Activated CD4-positive, alpha-beta memory T cell treated with anti-CD3 and anti-CD28 coated beads for 36 hours (primary cell): ENCODE measurements at regions of chr1 and their contacts with region 1.

Region 1: DNA sequence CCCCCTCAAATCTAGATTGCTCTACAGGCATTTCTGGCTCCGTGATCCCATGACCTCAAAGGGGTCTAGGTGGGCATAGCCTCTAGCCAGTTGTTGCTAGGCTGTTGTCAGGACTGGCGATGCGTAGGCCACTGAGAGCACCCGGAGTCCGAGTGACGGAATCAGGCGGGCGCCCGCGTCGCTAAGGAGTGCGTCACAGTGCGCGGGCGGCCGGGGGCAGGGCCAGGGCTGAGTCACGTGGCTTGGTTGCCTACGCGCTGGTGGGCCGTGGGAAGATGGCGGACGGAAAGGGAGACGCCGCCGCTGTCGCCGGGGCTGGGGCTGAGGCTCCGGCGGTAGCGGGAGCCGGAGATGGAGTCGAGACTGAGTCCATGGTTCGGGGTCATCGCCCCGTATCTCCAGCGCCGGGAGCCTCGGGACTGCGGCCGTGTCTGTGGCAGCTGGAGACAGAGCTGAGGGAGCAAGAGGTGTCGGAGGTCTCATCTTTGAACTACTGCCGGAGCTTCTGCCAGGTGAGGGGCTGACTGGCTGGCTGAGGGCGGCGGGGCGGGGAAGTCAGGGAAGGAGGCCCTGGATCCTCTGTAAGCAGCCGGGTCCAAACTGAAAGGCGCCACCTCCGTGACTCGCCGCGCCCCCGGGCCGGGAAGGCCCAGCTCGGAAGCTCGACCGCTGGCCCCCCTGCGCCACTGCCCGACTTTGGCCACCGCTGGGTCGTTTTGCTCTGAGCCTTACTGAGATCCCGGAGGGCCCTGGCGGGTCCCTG is at the start of gene RLF:
- DNase-seq: peak; percentile 97
- H3K4me3 Mint-ChIP-seq: no peak within 1 kb of the TSS
- H3K27ac Mint-ChIP-seq: no peak within 1 kb of the TSS
- H3K4me1 Mint-ChIP-seq: peaks cover 4% of the 10 kb centered on the region
- H3K27me3 Mint-ChIP-seq: no peaks in the 10 kb centered on the region
- total RNA-seq, gene RLF: 19.6 to 19.7 TPM

Region 2: DNA sequence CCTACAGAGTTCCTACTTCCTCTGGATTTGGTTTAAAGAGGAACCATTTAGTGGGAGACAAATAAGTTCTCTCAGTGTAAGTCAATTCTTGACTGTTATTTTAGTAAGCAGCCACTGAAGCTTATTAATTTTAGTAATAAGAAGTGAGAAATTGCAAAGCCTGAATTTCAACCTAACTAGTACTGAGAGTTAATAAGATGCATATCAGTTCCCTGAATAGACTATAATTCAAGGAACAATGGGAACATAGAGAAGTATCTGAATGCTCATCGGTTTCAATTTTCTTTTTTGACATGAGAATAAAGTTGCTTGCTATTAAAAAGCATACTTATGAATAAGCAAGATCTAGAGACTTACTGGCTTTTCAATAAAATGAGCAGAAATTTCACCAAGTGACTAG is 56.3 kb before region 1 on chr1:
- CTCF ChIA-PET with region 1: no interaction called
- POLR2A ChIA-PET with region 1: no interaction called
- intact Hi-C with region 1: loop called (anchors 2 kb)
- DNase-seq: no peak
- H3K4me3 Mint-ChIP-seq: no peak overlapping the region
- H3K27ac Mint-ChIP-seq: no peak overlapping the region
- H3K4me1 Mint-ChIP-seq: peaks cover 6% of the 10 kb centered on the region
- H3K27me3 Mint-ChIP-seq: peaks cover 17% of the 10 kb centered on the region

Region 3: GRCh38 chr1:40224040-40224439 is 62.7 kb after region 1 on chr1:
- CTCF ChIA-PET with region 1: interaction called, 3 read pairs
- POLR2A ChIA-PET with region 1: interaction called, 5 read pairs
- intact Hi-C with region 1: loop called (anchors 5 kb)
- DNase-seq: peak; percentile 41
- H3K4me3 Mint-ChIP-seq: no peak overlapping the region
- H3K27ac Mint-ChIP-seq: no peak overlapping the region
- H3K4me1 Mint-ChIP-seq: peaks cover 25% of the 10 kb centered on the region
- H3K27me3 Mint-ChIP-seq: no peaks in the 10 kb centered on the region

Region 4: DNA sequence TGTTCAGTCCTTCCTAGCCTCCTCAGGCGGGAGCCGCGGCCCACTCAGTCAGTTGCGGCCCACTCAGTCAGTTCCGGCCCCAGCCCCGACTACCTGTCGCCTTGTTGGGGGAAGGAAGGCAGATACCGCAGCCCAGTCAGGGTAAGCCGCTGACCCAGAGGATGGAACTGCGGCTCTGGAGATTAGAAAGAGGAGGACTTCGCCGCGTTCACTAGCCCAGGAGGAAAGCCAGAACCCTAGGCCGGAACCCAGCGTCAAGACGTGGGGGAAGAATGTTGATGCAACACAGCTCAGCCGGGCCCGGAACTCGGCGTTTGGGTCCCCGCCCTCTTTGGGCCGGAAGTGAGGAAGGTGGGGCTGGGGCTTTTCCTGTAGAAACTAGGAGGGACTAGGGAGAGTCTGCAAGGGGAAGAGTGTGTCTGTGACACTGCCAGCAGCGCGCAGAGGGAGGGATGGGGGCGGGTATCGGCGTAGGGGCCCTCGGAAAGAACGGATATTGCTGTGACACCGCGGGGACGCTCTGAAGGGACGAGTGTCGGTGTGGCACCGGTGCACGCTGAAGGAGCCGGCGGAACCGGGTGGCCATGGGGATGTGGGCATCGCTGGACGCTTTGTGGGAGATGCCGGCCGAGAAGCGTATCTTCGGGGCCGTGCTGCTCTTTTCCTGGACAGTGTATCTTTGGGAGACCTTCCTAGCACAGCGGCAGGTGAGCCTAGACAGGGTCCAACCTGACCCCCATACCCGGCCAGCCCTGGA is 96.6 kb after region 1 on chr1 and contains the start of gene ZMPSTE24:
- CTCF ChIA-PET with region 1: interaction called, 3 read pairs
- POLR2A ChIA-PET with region 1: interaction called, 7 read pairs
- intact Hi-C with region 1: loop called (anchors 1 kb)
- DNase-seq: peak; percentile 98
- H3K4me3 Mint-ChIP-seq: peak within 1 kb of the TSS; percentile 86
- H3K27ac Mint-ChIP-seq: peak within 1 kb of the TSS; percentile 97
- H3K4me1 Mint-ChIP-seq: peaks cover 54% of the 10 kb centered on the region
- H3K27me3 Mint-ChIP-seq: no peaks in the 10 kb centered on the region
- total RNA-seq, gene ZMPSTE24: 29.5 to 30.5 TPM

Region 5: GRCh38 chr1:40270152-40270834 is 109.0 kb after region 1 on chr1:
- CTCF ChIA-PET with region 1: no interaction called
- POLR2A ChIA-PET with region 1: interaction called, 4 read pairs
- intact Hi-C with region 1: loop called (anchors 1 kb)
- DNase-seq: peak; percentile 48
- H3K4me3 Mint-ChIP-seq: no peak overlapping the region
- H3K27ac Mint-ChIP-seq: peak overlapping the region; percentile 93
- H3K4me1 Mint-ChIP-seq: peaks cover 42% of the 10 kb centered on the region
- H3K27me3 Mint-ChIP-seq: no peaks in the 10 kb centered on the region

Region 6: DNA sequence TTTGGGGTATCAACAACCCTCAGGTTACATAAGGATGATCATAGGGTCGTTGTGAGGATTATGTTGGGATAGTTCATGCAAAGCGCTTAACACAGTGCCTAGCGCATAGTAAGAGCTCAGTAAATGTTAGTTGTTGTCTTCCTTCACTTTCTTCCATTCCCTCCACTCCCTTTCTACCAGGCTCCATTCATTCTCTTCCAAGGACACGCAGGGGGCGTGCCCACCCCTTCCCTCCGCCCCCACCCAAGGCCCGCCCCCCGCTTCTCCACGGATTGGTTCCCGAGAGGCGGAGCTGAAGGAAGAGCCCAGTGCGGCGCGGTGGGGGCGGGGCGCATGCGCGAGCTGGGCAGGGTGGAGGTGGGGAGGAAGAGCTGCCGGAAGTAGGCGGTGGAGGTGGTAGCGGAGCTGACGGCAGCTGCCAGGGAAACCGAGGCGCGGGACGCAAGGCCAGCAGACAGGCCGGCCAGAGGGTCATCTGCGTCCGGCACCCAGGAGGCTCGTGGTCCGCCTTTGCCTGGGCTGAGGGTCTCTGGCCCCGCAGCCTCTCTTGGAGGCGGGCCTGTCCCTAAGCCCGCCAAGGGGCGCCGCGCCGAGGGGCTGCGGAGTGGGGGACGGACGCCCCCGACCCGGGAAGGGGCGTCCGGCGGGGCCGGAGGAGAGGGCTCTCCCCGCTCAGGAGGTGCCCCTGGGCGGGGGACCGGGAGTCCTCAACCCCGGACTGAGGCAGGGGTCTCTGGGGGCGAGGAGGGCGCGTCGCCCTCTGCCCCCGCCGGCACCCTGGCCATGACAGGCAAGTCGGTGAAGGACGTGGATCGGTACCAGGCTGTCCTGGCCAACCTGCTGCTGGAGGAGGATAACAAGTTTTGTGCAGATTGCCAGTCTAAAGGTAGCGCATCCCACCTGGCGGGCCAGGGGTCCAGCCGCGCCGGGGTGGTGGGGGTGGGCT is 212.3 kb after region 1 on chr1 and contains the start of gene SMAP2:
- CTCF ChIA-PET with region 1: no interaction called
- POLR2A ChIA-PET with region 1: interaction called, 14 read pairs
- intact Hi-C with region 1: no loop called
- DNase-seq: peak; percentile 98
- H3K4me3 Mint-ChIP-seq: peak within 1 kb of the TSS; percentile 97
- H3K27ac Mint-ChIP-seq: peak within 1 kb of the TSS; percentile 99
- H3K4me1 Mint-ChIP-seq: peaks cover 44% of the 10 kb centered on the region
- H3K27me3 Mint-ChIP-seq: peaks cover 1% of the 10 kb centered on the region
- total RNA-seq, gene SMAP2: 250 to 254 TPM